Panc1 (cell line): ENCODE measurements at regions of chr6 and their contacts with region 1.

Region 1: DNA sequence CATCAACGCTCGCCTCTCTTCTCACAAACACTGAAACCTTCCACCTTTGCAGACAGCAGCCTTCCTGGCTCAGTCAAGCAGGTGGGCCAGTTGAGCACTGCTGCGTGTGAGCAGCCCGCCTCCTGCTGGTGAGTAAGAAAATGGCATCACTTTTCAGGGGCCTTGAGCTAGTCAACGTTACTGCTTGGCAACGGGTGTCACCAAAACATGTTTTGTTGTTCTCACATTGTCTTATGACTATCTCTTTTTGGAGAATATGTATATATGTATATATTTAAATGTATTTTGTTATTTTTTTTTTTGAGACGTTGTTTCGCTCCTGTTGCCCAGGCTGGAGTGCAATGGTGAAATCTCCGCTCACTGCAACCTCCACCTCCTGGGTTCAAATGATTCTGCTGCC is 97.0 kb upstream of the AGPAT4 start:
- DNase-seq: peak; percentile 55
- ATAC-seq: peak; percentile 80
- H3K4me3 ChIP-seq: no peak overlapping the region
- H3K27ac ChIP-seq: no peak overlapping the region
- H3K4me1 ChIP-seq: peaks cover 5% of the 10 kb centered on the region; the same call in 1 of the 2 replicates
- H3K27me3 ChIP-seq: no peaks in the 10 kb centered on the region
- CTCF ChIP-seq: peak; percentile 97

Region 2: DNA sequence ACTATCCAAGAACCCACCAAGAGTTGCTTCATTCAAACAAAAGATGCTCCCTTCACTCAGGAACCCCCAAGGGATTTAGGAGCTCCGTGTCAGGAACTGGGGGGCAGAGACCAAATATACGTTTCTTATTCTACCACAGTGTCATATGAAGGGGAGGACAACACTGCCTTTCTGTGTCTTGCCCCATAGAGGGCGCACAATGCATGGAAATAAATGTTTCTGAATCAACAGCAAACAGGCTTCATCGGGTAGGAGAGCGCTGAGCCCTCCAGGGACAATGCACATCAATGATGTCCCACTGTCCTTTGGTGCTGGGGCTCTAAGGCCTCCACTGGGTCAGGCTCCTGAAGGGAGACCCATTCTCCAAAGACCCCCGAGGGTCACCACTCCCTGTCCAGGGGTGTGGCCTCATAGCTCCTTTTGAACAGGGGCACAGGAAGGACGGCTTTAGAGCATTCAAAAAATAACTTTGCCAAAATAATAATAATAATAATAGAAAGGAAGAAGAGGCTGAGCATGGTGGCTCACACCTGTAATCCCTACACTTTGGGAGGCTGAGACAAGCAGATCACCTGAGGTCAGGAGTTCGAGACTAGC is 637.7 kb before region 1 on chr6:
- CTCF ChIA-PET with region 1: interaction called, 4 read pairs
- POLR2A ChIA-PET with region 1: no interaction called
- in situ Hi-C with region 1: no loop called
- intact Hi-C with region 1: loop called (anchors 2 kb)
- DNase-seq: peak; percentile 22
- ATAC-seq: peak; percentile 98
- H3K4me3 ChIP-seq: no peak overlapping the region
- H3K27ac ChIP-seq: no peak overlapping the region
- H3K4me1 ChIP-seq: no peaks in the 10 kb centered on the region
- H3K27me3 ChIP-seq: no peaks in the 10 kb centered on the region
- CTCF ChIP-seq: peak; percentile 85

Region 3: GRCh38 chr6:160992061-160992979 is 378.6 kb before region 1 on chr6:
- CTCF ChIA-PET with region 1: interaction called, 3 read pairs
- POLR2A ChIA-PET with region 1: no interaction called
- in situ Hi-C with region 1: no loop called
- intact Hi-C with region 1: loop called (anchors 5 kb)
- DNase-seq: peak; percentile 58
- ATAC-seq: peak; percentile 69
- H3K4me3 ChIP-seq: peak overlapping the region; percentile 67 to 94
- H3K27ac ChIP-seq: peak overlapping the region; percentile 80
- H3K4me1 ChIP-seq: peaks cover 18% of the 10 kb centered on the region
- H3K27me3 ChIP-seq: no peaks in the 10 kb centered on the region
- CTCF ChIP-seq: peak; percentile 78

Region 4: DNA sequence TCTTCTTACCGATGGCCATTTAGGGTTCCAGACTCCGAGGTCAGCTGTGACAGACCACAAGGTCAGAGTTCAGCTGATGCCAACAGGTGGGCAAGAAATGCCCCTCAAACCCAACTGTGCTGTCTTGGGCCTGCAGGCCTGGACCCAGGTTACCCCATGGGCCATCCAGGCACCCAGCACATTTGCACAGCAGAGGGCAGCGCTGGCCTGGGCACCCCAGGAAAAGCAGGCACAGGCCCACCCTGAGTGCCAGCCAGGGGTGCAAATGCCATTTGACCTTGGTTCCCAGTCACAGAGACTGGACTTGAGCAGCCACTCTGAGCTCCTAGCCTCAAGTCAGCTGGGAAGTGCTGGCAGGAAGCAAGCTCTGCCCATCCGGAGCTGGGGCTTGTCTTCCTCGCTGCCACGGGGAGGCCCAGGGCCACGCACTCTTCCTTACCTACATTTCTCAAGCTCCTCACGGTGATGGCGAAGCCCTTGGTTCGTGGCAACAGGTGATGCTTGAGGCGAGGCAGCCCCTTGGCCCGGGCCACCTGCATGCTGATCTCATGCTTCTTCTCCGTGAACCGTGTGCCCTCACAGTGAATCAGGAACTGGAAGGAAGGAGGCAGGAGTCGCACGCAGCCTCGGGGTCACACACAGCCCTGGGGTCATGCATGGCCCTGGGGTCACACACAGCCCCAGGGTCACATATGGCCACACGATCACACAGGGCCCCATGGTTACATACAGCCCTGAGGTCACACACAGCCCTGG is 217.8 kb before region 1 on chr6:
- CTCF ChIA-PET with region 1: interaction called, 7 read pairs
- POLR2A ChIA-PET with region 1: no interaction called
- in situ Hi-C with region 1: no loop called
- intact Hi-C with region 1: loop called (anchors 5 kb)
- DNase-seq: no peak
- ATAC-seq: peak; percentile 75; the same call in 1 of the 2 replicates
- H3K4me3 ChIP-seq: no peak overlapping the region
- H3K27ac ChIP-seq: no peak overlapping the region
- H3K4me1 ChIP-seq: no peaks in the 10 kb centered on the region
- H3K27me3 ChIP-seq: no peaks in the 10 kb centered on the region
- CTCF ChIP-seq: peak; percentile 79; the same call in 1 of the 2 replicates

Region 5: DNA sequence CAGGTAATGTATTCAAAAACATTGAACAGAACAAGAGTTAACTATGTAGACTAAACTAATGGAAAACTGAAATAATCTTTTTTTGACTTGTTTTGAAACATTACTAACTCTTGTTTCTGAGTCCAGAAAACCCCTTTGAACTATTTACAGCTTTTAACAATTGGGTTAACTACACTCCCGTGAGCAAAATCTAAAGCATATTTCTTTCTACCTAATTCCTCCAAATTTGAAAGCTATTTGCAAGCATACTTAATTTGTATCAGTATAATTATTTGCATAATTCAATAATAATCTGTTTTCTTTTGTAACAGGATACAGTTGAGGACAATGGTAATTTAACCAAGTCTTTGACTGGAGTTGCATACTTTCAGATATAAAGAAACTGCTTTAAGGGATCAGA is 34.4 kb before region 1 on chr6:
- CTCF ChIA-PET with region 1: no interaction called
- POLR2A ChIA-PET with region 1: no interaction called
- in situ Hi-C with region 1: no loop called
- intact Hi-C with region 1: no loop called
- DNase-seq: no peak
- ATAC-seq: no peak
- H3K4me3 ChIP-seq: no peak overlapping the region
- H3K27ac ChIP-seq: no peak overlapping the region
- H3K4me1 ChIP-seq: no peaks in the 10 kb centered on the region
- H3K27me3 ChIP-seq: no peaks in the 10 kb centered on the region
- CTCF ChIP-seq: no peak

Region 6: DNA sequence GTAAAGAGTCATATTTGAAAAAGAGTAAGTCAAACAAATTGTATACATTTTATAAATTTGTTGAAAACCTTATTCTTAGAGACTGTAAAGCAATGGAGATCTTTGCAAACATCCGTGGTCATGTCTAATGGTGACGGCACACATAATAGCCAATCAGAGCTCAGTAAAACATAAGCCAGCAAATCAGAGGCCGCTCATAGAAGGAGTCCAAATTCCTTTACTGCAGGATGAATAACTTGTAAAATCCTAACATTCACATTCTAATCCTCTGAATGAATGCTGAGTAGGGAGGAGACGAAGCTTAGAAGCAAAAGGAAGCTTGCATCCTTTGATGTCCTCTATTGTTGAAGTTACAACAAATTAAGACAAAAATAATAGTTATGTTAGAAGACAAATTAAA is 954.9 kb after region 1 on chr6:
- CTCF ChIA-PET with region 1: interaction called, 14 read pairs
- POLR2A ChIA-PET with region 1: no interaction called
- in situ Hi-C with region 1: no loop called
- intact Hi-C with region 1: no loop called
- DNase-seq: no peak
- ATAC-seq: no peak
- H3K4me3 ChIP-seq: no peak overlapping the region
- H3K27ac ChIP-seq: no peak overlapping the region
- H3K4me1 ChIP-seq: no peaks in the 10 kb centered on the region
- H3K27me3 ChIP-seq: no peaks in the 10 kb centered on the region
- CTCF ChIP-seq: no peak